CD8-positive, alpha-beta memory T cell (primary cell): ENCODE measurements at regions of chr10 and their contacts with region 1.

Region 1: DNA sequence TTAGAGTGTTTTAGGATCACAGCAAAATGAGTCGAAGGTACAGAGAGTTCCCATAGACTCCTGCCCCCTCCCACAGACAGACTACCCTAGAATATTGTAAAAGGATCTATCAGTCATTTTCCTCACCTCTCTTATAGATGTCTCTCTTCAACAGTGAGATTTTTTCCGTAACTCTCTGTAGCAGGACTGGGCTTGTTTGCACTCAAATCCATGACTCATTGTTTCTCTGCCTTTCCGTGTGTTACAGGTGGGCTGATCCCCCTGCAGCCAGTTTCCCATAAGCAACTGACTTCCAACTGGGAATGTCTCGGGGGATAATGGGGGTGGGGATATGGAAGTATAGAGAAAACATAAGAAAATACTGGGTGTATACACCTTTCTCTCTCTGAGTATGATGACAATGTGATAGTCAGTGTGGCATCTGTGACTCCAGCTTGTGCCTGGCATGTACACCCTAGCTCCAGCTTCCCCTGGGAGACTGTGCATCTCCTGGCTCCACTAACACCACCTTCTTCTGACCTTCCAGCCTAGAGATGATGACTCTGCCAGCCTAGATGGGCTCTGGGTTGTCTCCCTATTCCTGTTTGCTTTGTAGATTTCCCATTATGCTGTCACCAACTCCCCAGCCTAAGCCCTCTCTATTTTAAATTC is 921.2 kb downstream of the GATA3 start:
- DNase-seq: no peak
- H3K4me3 ChIP-seq: no peak overlapping the region
- H3K4me3 Mint-ChIP-seq: no peak overlapping the region
- H3K27ac ChIP-seq: no peak overlapping the region
- H3K27ac Mint-ChIP-seq: no peak overlapping the region
- H3K4me1 ChIP-seq: no peaks in the 10 kb centered on the region
- H3K4me1 Mint-ChIP-seq: no peaks in the 10 kb centered on the region
- H3K27me3 ChIP-seq: no peaks in the 10 kb centered on the region
- H3K27me3 Mint-ChIP-seq: peaks cover 4 to 21% of the 10 kb centered on the region in 2 donors

Region 2: DNA sequence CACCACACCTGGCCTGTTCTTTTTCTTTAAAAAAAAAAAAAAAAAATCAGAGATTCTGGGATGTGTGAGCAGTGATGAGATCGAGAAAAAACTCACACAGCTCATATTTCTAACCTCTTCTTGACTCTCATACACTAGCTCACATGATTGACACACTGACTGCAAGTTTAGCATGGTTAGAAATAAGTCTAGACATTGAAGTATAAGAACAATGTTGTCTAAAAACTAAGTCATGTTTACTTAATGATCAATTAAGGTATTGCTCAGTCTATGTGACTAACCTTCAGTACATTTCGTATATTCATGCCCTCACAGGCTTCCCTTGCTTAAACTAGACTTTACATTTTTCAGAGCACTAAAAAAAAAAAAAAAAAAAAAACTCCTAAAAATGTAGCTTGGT is 146.1 kb before region 1 on chr10:
- CTCF ChIA-PET with region 1: no interaction called
- POLR2A ChIA-PET with region 1: interaction called, 12 read pairs
- DNase-seq: no peak
- H3K4me3 ChIP-seq: no peak overlapping the region
- H3K4me3 Mint-ChIP-seq: no peak overlapping the region
- H3K27ac ChIP-seq: no peak overlapping the region
- H3K27ac Mint-ChIP-seq: no peak overlapping the region
- H3K4me1 ChIP-seq: no peaks in the 10 kb centered on the region
- H3K4me1 Mint-ChIP-seq: no peaks in the 10 kb centered on the region
- H3K27me3 ChIP-seq: no peaks in the 10 kb centered on the region
- H3K27me3 Mint-ChIP-seq: peaks cover 4 to 9% of the 10 kb centered on the region in 2 donors